H1 (cell line): ENCODE measurements at regions of chr1 and their contacts with region 1.

Region 1: DNA sequence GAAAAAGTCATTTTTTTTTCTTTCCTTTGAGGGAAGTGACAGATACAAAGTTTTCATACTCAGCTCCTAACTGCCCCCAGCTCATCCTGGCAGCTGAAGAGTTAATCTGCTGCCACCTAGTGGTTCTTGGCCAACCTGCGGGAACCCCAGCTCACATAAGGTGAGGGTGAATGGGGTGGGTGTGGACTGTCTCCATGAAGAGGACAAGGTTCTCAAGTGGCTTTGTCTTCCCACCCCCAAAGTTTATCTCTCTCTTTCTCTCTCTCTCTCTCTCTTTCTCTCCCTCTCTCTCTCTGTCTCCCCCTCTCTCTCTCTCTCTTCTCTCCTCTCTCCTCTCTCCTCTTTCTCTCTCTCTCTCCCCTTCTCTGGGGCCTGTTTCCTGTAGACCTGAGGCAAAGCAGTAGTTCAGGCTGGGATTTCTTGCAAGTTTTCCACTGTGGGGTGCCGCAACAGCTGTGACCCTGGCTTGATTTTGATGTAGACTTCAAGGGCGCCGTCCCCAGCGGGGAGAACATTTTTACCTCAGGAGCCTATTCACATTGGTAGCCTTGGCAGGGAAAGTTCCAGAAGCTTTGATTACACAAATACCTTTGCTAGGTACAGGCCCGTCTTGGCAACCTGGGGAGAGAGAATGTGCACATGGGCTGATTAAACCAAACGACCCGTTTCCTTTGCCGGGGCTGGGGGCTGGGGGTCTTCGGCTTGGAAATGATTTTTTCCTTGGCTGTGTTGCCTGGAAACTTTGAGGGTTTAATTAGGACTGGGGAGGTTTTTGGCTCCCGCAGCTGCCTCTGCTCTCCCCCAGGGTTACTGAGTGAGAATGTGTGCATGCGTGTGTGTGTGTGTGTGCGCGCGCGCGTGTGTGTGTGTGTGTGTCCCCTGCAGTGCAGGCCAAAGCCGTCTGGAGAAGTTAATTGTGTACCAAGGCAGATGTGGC is 135.9 kb downstream of the TM2D1 start:
- DNase-seq: peak; percentile 43 to 85
- H3K4me3 ChIP-seq: peak overlapping the region in 1 of 4 experiments; percentile 13; a peak in 2 of 8 replicates
- H3K27ac ChIP-seq: no peak overlapping the region
- H3K4me1 ChIP-seq: peaks cover 3 to 9% (median 6%) of the 10 kb centered on the region in 4 experiments; a peak in 6 of 7 replicates
- H3K27me3 ChIP-seq: no peaks in the 10 kb centered on the region
- CTCF ChIP-seq: peak; percentile 81 to 95 (median 86)
- EP300 ChIP-seq: no peak
- POLR2A ChIP-seq: no peak
- RAD21 ChIP-seq: peak; percentile 85 to 89

Region 2: GRCh38 chr1:61536174-61537108 is 52.6 kb before region 1 on chr1:
- CTCF ChIA-PET with region 1: no interaction called
- POLR2A ChIA-PET with region 1: no interaction called
- DNase-seq: no peak
- H3K4me3 ChIP-seq: no peak overlapping the region
- H3K27ac ChIP-seq: no peak overlapping the region
- H3K4me1 ChIP-seq: peaks cover 0 to 5% (median 3%) of the 10 kb centered on the region in 4 experiments; a peak in 2 of 7 replicates
- H3K27me3 ChIP-seq: no peaks in the 10 kb centered on the region
- CTCF ChIP-seq: no peak
- EP300 ChIP-seq: no peak
- POLR2A ChIP-seq: no peak
- RAD21 ChIP-seq: no peak

Region 3: GRCh38 chr1:61556631-61557030 is 32.4 kb before region 1 on chr1:
- CTCF ChIA-PET with region 1: interaction called, 12 read pairs
- POLR2A ChIA-PET with region 1: no interaction called
- DNase-seq: no peak
- H3K4me3 ChIP-seq: no peak overlapping the region
- H3K27ac ChIP-seq: no peak overlapping the region
- H3K4me1 ChIP-seq: no peaks in the 10 kb centered on the region
- H3K27me3 ChIP-seq: no peaks in the 10 kb centered on the region
- CTCF ChIP-seq: no peak
- EP300 ChIP-seq: no peak
- POLR2A ChIP-seq: no peak
- RAD21 ChIP-seq: no peak

Region 4: DNA sequence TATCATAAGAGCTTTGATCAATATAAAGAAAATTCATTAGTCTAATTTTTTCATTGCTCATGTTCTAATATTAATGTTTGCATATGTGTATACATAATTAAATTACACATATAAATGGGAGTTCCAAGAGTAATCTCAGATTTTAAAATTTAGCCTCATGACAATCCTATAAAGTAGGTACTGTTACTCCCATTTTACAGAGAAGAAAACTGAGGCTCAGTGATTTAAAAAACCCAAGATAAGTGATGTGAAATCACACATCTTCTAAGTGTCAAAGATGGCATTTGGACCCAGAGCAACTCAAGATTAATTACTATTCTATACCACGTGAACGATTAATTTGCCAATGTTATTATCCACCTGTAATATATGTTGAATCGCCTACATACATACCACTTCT is 13.7 kb after region 1 on chr1:
- CTCF ChIA-PET with region 1: interaction called, 11 read pairs
- POLR2A ChIA-PET with region 1: interaction called, 4 read pairs
- DNase-seq: no peak
- H3K4me3 ChIP-seq: no peak overlapping the region
- H3K27ac ChIP-seq: no peak overlapping the region
- H3K4me1 ChIP-seq: peaks cover 0 to 8% (median 0%) of the 10 kb centered on the region in 4 experiments; a peak in 2 of 7 replicates
- H3K27me3 ChIP-seq: no peaks in the 10 kb centered on the region
- CTCF ChIP-seq: no peak
- EP300 ChIP-seq: no peak
- POLR2A ChIP-seq: no peak
- RAD21 ChIP-seq: no peak